Heart left ventricle (tissue), 16 donors: ENCODE measurements at regions of chr7 and their contacts with region 1.

Region 1: GRCh38 chr7:92633211-92633906 is 43.2 kb upstream of the FAM133B start:
- DNase-seq: peak in 1 of 5 donors; percentile 25
- ATAC-seq: peak; percentile 79 to 92 (median 90)
- H3K4me3 ChIP-seq: peak overlapping the region in 1 of 12 donors; percentile 8
- H3K27ac ChIP-seq: peak overlapping the region; percentile 17 to 86 (median 60)
- H3K4me1 ChIP-seq: peaks cover 14 to 62% (median 43%) of the 10 kb centered on the region in 12 donors
- H3K27me3 ChIP-seq: no peaks in the 10 kb centered on the region
- CTCF ChIP-seq: no peak
- POLR2A ChIP-seq: no peak

Region 2: DNA sequence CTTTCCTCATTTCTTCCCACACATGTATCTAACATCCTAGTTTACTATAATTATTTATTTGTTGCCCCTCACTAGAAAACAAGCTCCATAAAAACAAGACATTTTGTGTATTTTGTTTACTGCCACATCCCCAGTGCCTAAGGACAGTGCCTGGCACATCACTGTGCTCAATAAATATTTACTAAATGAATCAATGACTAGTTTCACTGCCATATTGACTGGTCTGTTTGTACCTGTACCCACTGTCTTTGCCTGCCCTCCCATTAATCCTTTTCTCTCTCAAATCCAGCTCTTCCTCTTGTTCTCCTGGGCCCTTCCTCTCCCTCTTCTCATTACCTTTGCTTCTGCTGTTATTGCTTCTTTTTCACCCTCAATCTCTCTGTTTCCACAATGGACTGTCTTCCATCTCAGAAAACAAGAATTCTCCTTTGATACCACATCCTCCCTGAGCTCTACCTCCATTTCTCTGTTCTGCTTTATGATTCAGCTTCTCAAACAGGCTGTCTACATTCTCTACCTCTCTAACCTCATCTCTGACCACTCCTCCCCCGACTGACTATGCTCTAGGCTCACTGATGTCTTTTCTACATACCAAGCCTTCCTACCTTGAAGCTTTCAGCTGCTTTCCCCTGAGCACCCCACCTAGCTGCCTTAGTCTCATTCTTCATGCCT is 34.9 kb before region 1 on chr7:
- intact Hi-C with region 1: no loop called
- DNase-seq: no peak
- ATAC-seq: no peak
- H3K4me3 ChIP-seq: no peak overlapping the region
- H3K27ac ChIP-seq: no peak overlapping the region
- H3K4me1 ChIP-seq: peaks cover 0 to 7% (median 0%) of the 10 kb centered on the region in 12 donors
- H3K27me3 ChIP-seq: no peaks in the 10 kb centered on the region
- CTCF ChIP-seq: no peak
- POLR2A ChIP-seq: no peak

Region 3: DNA sequence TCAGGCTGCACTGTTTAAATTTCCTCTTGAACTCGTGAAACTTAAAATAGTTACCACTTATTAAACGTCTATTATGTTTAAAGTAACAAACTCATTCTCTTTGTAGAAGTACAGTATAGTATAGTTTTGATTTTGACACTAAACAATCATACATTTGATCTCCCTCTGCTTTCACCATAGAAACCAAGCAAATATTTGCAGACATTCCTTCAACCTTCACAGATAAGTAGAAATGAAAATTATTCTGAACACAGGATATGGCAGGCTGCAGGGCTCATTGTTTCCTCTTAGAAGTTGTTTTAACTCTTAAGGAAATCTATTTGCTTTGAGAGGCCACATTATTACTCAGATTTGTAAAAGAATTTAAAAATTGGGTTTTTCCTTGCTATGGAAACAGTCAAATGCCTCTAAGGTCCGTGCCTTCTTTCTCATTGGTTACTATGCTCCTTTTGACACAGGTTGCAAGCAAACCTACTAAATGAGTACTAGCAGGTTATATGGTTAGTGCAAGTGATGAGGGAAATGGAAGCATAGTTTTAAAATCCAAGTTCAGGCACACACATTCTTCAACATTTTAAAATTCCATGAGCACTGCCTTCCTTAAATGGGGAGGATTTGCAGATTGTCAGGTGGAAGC is 49.7 kb after region 1 on chr7:
- intact Hi-C with region 1: loop called in 3 of 10 experiments (anchors 5 to 10 kb)
- DNase-seq: no peak
- ATAC-seq: no peak
- H3K4me3 ChIP-seq: no peak overlapping the region
- H3K27ac ChIP-seq: peak overlapping the region in 2 of 12 donors; percentile 2 to 56
- H3K4me1 ChIP-seq: peaks cover 0 to 51% (median 18%) of the 10 kb centered on the region in 12 donors
- H3K27me3 ChIP-seq: no peaks in the 10 kb centered on the region
- CTCF ChIP-seq: no peak
- POLR2A ChIP-seq: no peak

Region 4: GRCh38 chr7:92933810-92934449 is 300.6 kb after region 1 on chr7:
- intact Hi-C with region 1: no loop called
- DNase-seq: no peak
- ATAC-seq: no peak
- H3K4me3 ChIP-seq: no peak overlapping the region
- H3K27ac ChIP-seq: no peak overlapping the region
- H3K4me1 ChIP-seq: no peaks in the 10 kb centered on the region
- H3K27me3 ChIP-seq: no peaks in the 10 kb centered on the region
- CTCF ChIP-seq: no peak
- POLR2A ChIP-seq: no peak

Region 5: DNA sequence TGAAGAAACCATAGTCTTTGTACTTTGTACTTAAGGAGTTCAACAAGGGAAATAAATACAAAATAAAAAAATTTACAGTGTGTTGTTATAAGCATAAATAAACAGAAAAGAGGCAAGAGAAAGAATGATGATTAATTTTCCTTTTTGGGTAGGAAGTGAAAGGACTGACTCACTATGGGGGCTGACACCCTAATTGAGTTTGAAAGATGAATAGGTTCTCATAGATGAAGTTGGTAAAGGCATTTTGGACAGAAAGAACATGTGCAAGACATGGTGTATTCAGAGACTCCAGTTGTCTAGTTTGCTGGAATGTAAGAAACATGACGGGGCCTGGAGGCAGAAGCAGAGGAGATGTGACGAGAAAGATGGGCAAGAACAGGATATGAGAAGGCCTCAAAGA is 682.5 kb after region 1 on chr7:
- intact Hi-C with region 1: no loop called
- DNase-seq: no peak
- ATAC-seq: no peak
- H3K4me3 ChIP-seq: no peak overlapping the region
- H3K27ac ChIP-seq: no peak overlapping the region
- H3K4me1 ChIP-seq: no peaks in the 10 kb centered on the region
- H3K27me3 ChIP-seq: no peaks in the 10 kb centered on the region
- CTCF ChIP-seq: no peak
- POLR2A ChIP-seq: no peak